Activated T-helper 2 cell treated with anti-CD3 and anti-CD28 coated beads, Interferon-gamma antibody, Interleukin-2, Interleukin-4, amounts not matched to agents 10 μg/mL and 5 μg/mL and 100 μg/mL, durations not matched to agents 14 hours and 24 hours and 36 hours (primary cell): ENCODE measurements at regions of chr9 and their contacts with region 1.

Region 1: DNA sequence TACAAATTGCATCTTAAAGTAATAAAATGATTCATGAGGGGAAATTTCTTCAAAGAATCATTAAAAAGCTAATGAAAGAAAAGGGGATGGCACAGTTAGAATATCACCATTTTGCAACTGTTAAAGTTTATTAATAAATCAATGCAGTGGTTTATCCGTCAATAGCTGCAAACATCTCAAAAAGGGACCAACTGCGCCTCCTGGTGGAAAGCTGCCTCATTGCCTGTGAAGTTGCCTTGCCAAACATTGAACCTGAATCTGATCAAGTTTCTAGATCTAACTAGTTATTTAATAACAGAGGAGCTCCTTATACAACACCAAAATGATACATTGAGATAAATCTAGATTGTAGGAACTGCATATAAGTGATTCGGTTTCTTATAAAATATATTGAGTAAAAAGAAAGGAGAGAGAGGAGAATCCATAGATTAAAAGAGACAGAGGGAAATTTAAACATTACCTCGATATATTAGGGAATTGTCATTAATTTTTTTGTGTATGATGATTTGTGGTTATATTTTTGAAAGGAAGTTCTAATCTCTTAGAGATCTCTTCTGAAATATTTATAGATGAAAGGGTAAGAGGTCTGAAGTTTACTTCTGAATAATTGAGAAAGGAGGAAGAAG is 6.9 kb upstream of the NDUFB6 start:
- DNase-seq: peak; percentile 53
- H3K4me3 Mint-ChIP-seq: no peak overlapping the region
- H3K27ac Mint-ChIP-seq: no peak overlapping the region
- H3K4me1 Mint-ChIP-seq: peaks cover 7% of the 10 kb centered on the region
- H3K27me3 Mint-ChIP-seq: peaks cover 23% of the 10 kb centered on the region

Region 2: DNA sequence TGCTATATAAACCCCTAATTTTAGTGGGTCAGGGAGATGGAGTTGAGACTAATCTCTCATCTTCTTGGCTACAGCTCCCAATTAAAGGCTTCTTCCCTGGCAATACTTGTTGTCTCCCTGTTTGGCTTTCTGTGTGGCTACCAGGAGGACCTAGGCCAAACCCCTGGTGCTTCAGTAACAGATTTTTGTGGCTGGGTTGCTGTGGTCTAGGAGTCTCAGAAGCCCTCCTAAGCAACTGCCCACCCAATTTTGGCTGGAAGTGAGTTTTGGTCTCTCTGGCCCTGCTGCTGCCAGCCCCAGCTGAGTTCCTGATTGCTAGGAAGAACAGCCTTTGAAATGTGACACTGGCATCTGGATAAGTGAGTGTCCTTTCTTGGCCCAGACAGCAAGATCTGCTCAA is 63.6 kb before region 1 on chr9:
- intact Hi-C with region 1: no loop called
- DNase-seq: no peak
- H3K4me3 Mint-ChIP-seq: no peak overlapping the region
- H3K27ac Mint-ChIP-seq: no peak overlapping the region
- H3K4me1 Mint-ChIP-seq: peaks cover 6% of the 10 kb centered on the region
- H3K27me3 Mint-ChIP-seq: no peaks in the 10 kb centered on the region

Region 3: GRCh38 chr9:32543047-32543446 is 36.8 kb before region 1 on chr9:
- intact Hi-C with region 1: loop called (anchors 5 kb)
- DNase-seq: no peak
- H3K4me3 Mint-ChIP-seq: no peak overlapping the region
- H3K27ac Mint-ChIP-seq: no peak overlapping the region
- H3K4me1 Mint-ChIP-seq: peaks cover 7% of the 10 kb centered on the region
- H3K27me3 Mint-ChIP-seq: no peaks in the 10 kb centered on the region

Region 4: DNA sequence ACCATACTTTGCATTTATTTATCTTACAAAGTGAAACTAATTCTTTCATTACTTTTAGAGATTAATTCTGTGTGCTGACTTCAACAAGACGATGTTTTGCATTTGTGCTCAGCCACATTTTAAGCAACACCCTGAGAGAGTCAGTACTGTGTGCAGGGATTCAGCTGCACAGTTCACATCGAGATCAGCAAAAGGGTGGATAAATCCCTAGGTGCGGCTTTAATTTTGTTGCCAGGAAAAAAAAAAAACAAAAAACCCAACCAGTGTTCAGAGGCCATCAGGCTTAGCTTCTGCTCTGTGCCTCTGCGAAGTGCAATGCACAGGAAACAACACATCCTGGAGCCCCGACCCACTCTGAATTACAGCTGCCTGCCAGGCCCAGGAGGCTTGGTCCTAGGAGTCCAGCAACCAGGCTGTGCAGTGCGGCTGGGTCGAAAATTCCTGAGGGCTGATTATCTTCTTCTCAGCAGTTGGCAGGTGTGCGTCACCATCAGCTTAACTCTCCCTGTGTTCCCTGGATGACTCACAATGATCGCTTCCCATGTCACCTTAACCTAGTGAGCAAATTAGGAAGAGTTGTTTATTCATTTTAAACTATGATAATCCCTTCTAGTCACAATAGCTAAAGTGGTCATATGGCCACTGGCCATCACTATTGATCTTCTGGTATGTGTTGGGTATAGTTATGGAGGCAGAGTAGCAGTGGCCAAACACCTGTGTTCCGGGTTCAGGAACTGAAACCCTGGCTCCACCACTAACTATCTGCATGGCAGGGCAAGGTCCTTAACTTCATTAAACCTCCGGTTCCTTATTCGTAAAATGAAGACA is 24.3 kb after region 1 on chr9:
- intact Hi-C with region 1: no loop called
- DNase-seq: no peak
- H3K4me3 Mint-ChIP-seq: no peak overlapping the region
- H3K27ac Mint-ChIP-seq: no peak overlapping the region
- H3K4me1 Mint-ChIP-seq: peaks cover 3% of the 10 kb centered on the region
- H3K27me3 Mint-ChIP-seq: peaks cover 12% of the 10 kb centered on the region